HepG2 (cell line): ENCODE measurements at regions of chr6 and their contacts with region 1.

Region 1: DNA sequence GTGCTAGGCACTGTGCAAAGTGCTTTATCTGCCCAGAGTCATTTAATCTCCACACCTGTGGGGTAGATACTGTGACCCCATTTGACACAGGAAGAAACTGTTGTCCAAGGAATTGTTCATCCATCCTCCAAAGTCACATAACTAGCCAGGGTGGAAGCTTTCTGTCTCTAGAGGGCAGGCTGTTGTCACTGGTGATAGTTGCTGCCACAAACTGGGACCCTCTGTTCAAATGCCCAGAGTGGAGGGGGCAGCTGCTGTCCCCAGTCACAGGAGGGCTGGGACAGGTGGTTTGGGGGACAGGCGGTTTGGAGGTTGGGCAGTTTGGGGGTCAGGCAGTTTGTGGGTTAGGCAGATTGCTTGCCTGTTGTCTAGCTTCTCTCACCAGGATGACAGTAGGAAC is 16.1 kb upstream of the TMEM242 start:
- DNase-seq: no peak
- ATAC-seq: peak; percentile 68
- H3K4me3 ChIP-seq: no peak overlapping the region
- H3K27ac ChIP-seq: no peak overlapping the region
- H3K4me1 ChIP-seq: peaks cover 15% of the 10 kb centered on the region
- H3K27me3 ChIP-seq: peaks cover 0 to 5% of the 10 kb centered on the region in 2 experiments; a peak in 3 of 5 replicates
- CTCF ChIP-seq: peak; percentile 81
- EP300 ChIP-seq: no peak
- POLR2A ChIP-seq: no peak
- RAD21 ChIP-seq: peak; percentile 62; the same call in 1 of the 2 replicates

Region 2: DNA sequence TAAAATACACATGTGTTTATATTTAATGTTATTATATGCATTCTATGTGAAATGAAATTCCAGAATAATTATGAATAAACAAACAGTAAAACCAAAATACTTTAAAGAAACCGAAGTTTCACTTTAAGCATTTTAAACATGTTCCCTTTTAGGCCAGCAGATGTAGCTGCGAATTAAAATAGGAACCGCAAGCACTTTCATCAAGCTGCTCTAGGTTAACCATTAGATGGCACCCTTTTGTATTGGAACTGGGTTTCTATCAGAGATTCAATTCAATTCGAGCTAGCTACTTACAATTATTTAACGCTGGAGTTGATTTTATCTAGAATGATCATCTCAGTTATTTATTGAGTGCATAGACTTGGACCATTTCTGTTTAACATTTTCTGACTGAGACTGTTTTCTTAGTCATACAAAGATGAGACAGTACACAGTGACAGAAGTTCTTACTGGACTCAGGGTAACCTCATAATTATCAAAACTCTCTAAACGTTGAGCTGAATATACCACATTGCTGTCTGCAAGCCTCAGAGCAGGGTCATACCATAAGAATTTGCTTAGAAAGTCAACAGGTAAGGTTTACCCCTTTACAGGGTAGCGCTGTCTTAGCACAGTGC is 24.6 kb before region 1 on chr6:
- CTCF ChIA-PET with region 1: interaction called, 60 read pairs
- POLR2A ChIA-PET with region 1: no interaction called
- in situ Hi-C with region 1: no loop called
- intact Hi-C with region 1: loop called (anchors 1 kb)
- DNase-seq: peak; percentile 76
- ATAC-seq: peak; percentile 87
- H3K4me3 ChIP-seq: no peak overlapping the region
- H3K27ac ChIP-seq: no peak overlapping the region
- H3K4me1 ChIP-seq: peaks cover 8% of the 10 kb centered on the region; the same call in 1 of the 2 replicates
- H3K27me3 ChIP-seq: no peaks in the 10 kb centered on the region
- CTCF ChIP-seq: peak; percentile 83
- EP300 ChIP-seq: no peak
- POLR2A ChIP-seq: no peak
- RAD21 ChIP-seq: peak; percentile 91

Region 3: DNA sequence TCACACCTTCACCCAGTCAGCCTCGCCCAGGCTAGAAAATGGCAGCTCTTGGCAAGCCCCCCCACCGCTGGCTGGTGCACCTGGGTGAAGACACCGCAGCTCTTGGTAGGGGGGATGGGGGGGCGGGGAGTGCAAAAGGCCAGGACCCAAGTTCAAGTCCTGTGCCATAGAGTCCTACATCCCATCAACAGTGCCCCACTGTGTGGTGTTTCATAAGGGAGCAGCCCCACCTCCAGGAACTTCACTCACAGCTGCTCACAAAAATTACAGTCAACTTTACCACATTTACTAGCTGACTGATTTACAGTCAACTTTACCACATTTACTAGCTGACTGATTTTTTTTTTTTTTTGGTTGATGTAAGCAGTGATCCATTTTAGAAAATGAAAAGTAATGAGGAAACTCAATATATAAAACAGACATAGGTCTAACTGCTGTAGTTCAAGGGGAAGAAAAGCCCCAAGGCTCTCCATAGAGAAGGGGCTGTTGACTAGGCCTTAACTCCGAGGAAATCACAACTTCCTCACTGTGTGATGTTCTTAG is 274.7 kb after region 1 on chr6:
- CTCF ChIA-PET with region 1: no interaction called
- POLR2A ChIA-PET with region 1: no interaction called
- in situ Hi-C with region 1: no loop called
- intact Hi-C with region 1: loop called (anchors 5 kb)
- DNase-seq: peak; percentile 41
- ATAC-seq: peak; percentile 76
- H3K4me3 ChIP-seq: peak overlapping the region in 1 of 3 experiments; percentile 4; a peak in 1 of 6 replicates
- H3K27ac ChIP-seq: peak overlapping the region; percentile 68
- H3K4me1 ChIP-seq: peaks cover 37% of the 10 kb centered on the region
- H3K27me3 ChIP-seq: no peaks in the 10 kb centered on the region
- CTCF ChIP-seq: peak; percentile 85
- EP300 ChIP-seq: no peak
- POLR2A ChIP-seq: no peak
- RAD21 ChIP-seq: peak; percentile 57; the same call in 1 of the 2 replicates